CD14-positive monocyte (primary cell): ENCODE measurements at regions of chr17 and their contacts with region 1.

Region 1: GRCh38 chr17:43483674-43484372 is at the start of gene DHX8:
- DNase-seq: peak; percentile 98 to 99 (median 99)
- H3K4me3 ChIP-seq: peak within 1 kb of the TSS; percentile 79 to 97 (median 84)
- H3K4me3 Mint-ChIP-seq: peak within 1 kb of the TSS; percentile 99
- H3K27ac ChIP-seq: peak within 1 kb of the TSS; percentile 79 to 94
- H3K27ac Mint-ChIP-seq: peak within 1 kb of the TSS; percentile 95 to 99 (median 97)
- H3K4me1 ChIP-seq: peaks cover 18 to 33% of the 10 kb centered on the region in 2 donors
- H3K4me1 Mint-ChIP-seq: peaks cover 31% of the 10 kb centered on the region
- H3K27me3 ChIP-seq: no peaks in the 10 kb centered on the region
- H3K27me3 Mint-ChIP-seq: peaks cover 0 to 2% (median 1%) of the 10 kb centered on the region in 3 donors
- CTCF ChIP-seq: peak; percentile 100
- polyA plus RNA-seq, gene DHX8: 21.8 to 35.6 (median 26.5) TPM

Region 2: GRCh38 chr17:43393944-43394482 is 89.8 kb before region 1 on chr17:
- intact Hi-C with region 1: loop called (anchors 1 kb)
- DNase-seq: peak; percentile 75 to 88 (median 84)
- H3K4me3 ChIP-seq: peak overlapping the region in 1 of 3 experiments; percentile 18
- H3K4me3 Mint-ChIP-seq: no peak overlapping the region
- H3K27ac ChIP-seq: peak overlapping the region in 1 of 2 donors; percentile 6
- H3K27ac Mint-ChIP-seq: peak overlapping the region in 4 of 7 donors; percentile 15 to 58 (median 34)
- H3K4me1 ChIP-seq: peaks cover 52 to 66% of the 10 kb centered on the region in 2 donors
- H3K4me1 Mint-ChIP-seq: peaks cover 45% of the 10 kb centered on the region
- H3K27me3 ChIP-seq: no peaks in the 10 kb centered on the region
- H3K27me3 Mint-ChIP-seq: peaks cover 0 to 6% (median under 1%) of the 10 kb centered on the region in 3 donors
- CTCF ChIP-seq: peak; percentile 86

Region 3: GRCh38 chr17:43418441-43419374 is 65.1 kb before region 1 on chr17:
- intact Hi-C with region 1: no loop called
- DNase-seq: peak in 1 of 3 donors; percentile 34
- H3K4me3 ChIP-seq: no peak overlapping the region
- H3K4me3 Mint-ChIP-seq: no peak overlapping the region
- H3K27ac ChIP-seq: no peak overlapping the region
- H3K27ac Mint-ChIP-seq: no peak overlapping the region
- H3K4me1 ChIP-seq: no peaks in the 10 kb centered on the region
- H3K4me1 Mint-ChIP-seq: peaks cover 3% of the 10 kb centered on the region
- H3K27me3 ChIP-seq: no peaks in the 10 kb centered on the region
- H3K27me3 Mint-ChIP-seq: peaks cover 18 to 29% (median 20%) of the 10 kb centered on the region in 3 donors
- CTCF ChIP-seq: no peak

Region 4: DNA sequence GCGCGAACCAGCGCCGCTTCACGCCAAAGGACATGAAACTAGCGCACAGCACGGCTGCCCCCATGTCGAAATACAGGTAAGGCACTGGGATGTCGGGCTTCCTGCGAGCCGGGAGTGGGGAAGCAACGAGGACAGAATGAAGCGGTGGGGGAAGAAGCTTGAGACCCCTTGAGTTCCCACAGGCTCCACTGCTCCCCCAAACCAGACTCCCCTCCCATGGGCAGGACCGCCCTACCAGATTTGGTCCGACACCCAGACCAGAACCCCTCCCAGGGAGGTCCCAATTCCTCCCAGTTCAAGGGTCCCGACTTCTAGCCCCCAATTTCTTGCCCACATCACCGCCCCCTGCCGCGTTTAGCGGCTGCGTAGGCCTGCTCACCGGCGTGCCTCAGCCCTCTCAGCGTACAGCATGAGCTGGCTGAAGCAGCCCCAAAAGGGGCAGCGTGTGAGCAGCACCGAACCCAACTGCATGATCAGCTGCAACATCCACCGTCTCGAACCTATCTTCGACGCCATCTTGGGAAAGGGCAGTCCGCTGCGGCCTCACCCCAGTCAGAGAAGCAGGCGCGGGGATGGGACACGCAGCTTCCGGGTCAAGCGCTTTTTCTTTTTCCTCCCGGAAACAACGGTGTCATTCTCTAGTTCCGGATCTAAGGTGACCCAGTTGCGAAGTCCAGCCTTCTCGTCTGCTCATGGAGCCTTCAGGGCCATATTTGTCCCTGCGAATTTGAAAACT is 530.8 kb after region 1 on chr17 and contains the start of gene TMEM101:
- intact Hi-C with region 1: loop called in 1 of 2 experiments (anchors 5 kb)
- DNase-seq: peak; percentile 91 to 93 (median 93)
- H3K4me3 ChIP-seq: peak within 1 kb of the TSS; percentile 63 to 98 (median 87)
- H3K4me3 Mint-ChIP-seq: peak within 1 kb of the TSS; percentile 97 to 100
- H3K27ac ChIP-seq: peak within 1 kb of the TSS in 1 of 2 donors; percentile 91
- H3K27ac Mint-ChIP-seq: peak within 1 kb of the TSS; percentile 82 to 97 (median 91)
- H3K4me1 ChIP-seq: peaks cover 12 to 17% of the 10 kb centered on the region in 2 donors
- H3K4me1 Mint-ChIP-seq: peaks cover 23% of the 10 kb centered on the region
- H3K27me3 ChIP-seq: no peaks in the 10 kb centered on the region
- H3K27me3 Mint-ChIP-seq: peaks cover 0 to 2% (median 0%) of the 10 kb centered on the region in 3 donors
- CTCF ChIP-seq: no peak
- polyA plus RNA-seq, gene TMEM101: 17.3 to 41.4 (median 33.6) TPM